Natural killer cell (primary cell): ENCODE measurements at regions of chr15 and their contacts with region 1.

Region 1: DNA sequence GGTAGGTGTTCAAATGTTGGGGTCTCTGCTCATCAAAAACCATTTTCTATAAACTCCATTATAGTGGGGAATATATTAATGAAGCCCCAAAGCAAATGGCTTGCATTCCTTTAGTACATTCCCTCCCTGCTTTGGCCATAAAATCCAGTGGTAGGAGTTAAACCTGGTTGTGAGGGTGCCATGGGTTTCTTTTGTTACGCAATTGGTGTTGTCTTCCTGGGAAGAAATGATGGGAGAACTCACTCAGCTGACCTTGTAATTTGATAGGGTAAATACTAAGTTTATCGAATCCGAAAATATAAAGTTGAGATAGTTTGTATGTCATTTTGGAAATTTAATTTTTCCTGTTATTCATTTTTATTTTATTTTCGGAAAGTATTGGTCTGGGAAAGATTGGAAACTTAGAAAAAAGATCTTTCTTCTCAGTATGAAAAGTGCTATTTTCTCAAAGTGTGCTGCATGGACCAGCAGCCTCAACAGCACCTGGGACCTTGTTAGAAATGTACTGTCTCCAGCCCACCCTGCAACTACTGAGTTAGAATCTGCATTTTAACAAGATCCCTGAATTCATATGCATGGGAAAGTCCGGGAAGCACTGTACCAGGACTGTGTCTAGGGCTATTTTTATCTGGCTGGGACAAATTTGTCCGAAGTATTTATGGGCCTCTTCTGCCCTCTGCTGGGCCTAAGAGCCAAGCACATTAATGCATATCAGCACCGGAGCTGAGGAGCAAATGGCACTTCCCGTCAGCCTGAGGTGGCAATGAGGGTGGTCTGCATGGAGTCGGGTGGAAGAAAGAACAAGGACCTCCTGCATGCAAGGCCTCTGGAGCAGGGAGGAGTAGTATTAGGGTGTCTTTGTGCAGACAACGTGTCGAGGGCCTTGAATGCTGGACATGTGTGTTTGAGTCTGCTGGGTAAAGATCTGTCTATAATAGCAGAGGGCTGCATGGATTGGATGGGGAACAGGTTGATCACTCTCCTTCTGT is 54.7 kb downstream of the FAM81A start:
- DNase-seq: peak; percentile 45 to 82
- ATAC-seq: peak; percentile 79 to 89 (median 88)
- H3K4me3 ChIP-seq: no peak overlapping the region
- H3K4me3 Mint-ChIP-seq: no peak overlapping the region
- H3K27ac ChIP-seq: no peak overlapping the region
- H3K27ac Mint-ChIP-seq: no peak overlapping the region
- H3K4me1 ChIP-seq: peaks cover 5% of the 10 kb centered on the region
- H3K4me1 Mint-ChIP-seq: peaks cover 6 to 7% of the 10 kb centered on the region in 2 donors
- H3K27me3 ChIP-seq: no peaks in the 10 kb centered on the region
- H3K27me3 Mint-ChIP-seq: peaks cover 3 to 21% of the 10 kb centered on the region in 2 donors
- CTCF ChIP-seq: peak; percentile 93

Region 2: GRCh38 chr15:58957101-58957973 is 535.3 kb before region 1 on chr15:
- intact Hi-C with region 1: loop called (anchors 1 kb)
- DNase-seq: peak; percentile 23 to 87
- ATAC-seq: peak; percentile 91 to 98 (median 96)
- H3K4me3 ChIP-seq: no peak overlapping the region
- H3K4me3 Mint-ChIP-seq: no peak overlapping the region
- H3K27ac ChIP-seq: no peak overlapping the region
- H3K27ac Mint-ChIP-seq: no peak overlapping the region
- H3K4me1 ChIP-seq: no peaks in the 10 kb centered on the region
- H3K4me1 Mint-ChIP-seq: peaks cover 5 to 6% of the 10 kb centered on the region in 2 donors
- H3K27me3 ChIP-seq: no peaks in the 10 kb centered on the region
- H3K27me3 Mint-ChIP-seq: peaks cover 0 to 8% of the 10 kb centered on the region in 2 donors
- CTCF ChIP-seq: peak; percentile 83

Region 3: GRCh38 chr15:59104912-59105732 is 387.6 kb before region 1 on chr15 and contains the start of gene CCNB2:
- intact Hi-C with region 1: loop called (anchors 5 kb)
- DNase-seq: peak; percentile 80 to 95
- ATAC-seq: peak; percentile 99 to 100 (median 100)
- H3K4me3 ChIP-seq: peak within 1 kb of the TSS; percentile 61
- H3K4me3 Mint-ChIP-seq: peak within 1 kb of the TSS; percentile 97
- H3K27ac ChIP-seq: peak within 1 kb of the TSS; percentile 57
- H3K27ac Mint-ChIP-seq: peak within 1 kb of the TSS; percentile 94 to 95
- H3K4me1 ChIP-seq: peaks cover 5% of the 10 kb centered on the region
- H3K4me1 Mint-ChIP-seq: peaks cover 8 to 9% of the 10 kb centered on the region in 2 donors
- H3K27me3 ChIP-seq: no peaks in the 10 kb centered on the region
- H3K27me3 Mint-ChIP-seq: no peaks in the 10 kb centered on the region
- CTCF ChIP-seq: no peak
- total RNA-seq, gene CCNB2: 0.47 to 1.4 (median 1.1) TPM

Region 4: DNA sequence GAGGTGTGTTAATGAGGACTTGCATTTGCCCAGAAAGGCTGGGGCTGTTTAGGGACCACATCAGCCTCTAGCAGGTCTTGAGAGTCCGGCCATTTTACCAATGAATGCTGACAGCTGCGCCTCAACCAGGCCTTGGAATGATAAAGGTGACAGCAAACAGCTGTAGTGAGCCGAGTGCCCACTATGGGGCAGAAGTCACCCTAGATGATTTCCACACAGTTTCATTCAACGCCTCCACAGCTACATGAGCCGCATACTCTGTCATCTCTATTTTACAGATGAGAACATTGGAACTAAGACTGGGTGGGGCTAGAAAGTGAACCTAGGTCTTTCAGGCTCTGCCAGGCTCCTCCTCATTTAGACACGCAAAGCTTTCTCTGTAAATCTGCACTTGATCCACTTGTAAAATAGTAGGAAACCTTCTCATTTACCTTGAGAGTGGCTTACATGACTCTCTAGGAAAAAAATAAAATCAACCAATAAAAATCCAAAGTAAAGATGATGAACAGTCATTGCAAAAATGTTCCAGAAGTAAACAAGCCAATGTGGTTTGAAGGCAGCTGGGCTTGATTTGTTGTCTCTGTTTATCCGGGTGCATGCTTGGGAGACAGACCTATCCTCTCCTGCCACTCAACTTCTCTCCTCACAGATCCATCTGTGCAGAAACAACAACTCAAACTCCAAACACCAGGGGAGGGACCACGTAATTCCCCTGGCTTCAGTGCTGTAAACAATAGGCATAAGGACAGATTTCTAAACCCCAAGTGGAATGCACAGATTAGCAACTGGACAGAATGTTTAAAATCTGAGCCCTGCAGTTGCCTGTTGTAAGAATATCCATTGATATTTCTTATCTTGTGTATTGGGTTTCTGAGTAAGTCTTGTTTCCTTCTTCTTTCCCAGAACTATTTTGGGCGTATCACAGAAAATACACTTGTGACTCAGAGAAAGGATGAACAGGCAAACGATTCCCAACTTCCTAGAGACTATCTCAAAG is 317.6 kb before region 1 on chr15:
- intact Hi-C with region 1: loop called (anchors 5 kb)
- DNase-seq: peak in 1 of 2 donors; percentile 48
- ATAC-seq: peak in 1 of 3 donors; percentile 36
- H3K4me3 ChIP-seq: no peak overlapping the region
- H3K4me3 Mint-ChIP-seq: no peak overlapping the region
- H3K27ac ChIP-seq: no peak overlapping the region
- H3K27ac Mint-ChIP-seq: no peak overlapping the region
- H3K4me1 ChIP-seq: peaks cover 12% of the 10 kb centered on the region
- H3K4me1 Mint-ChIP-seq: peaks cover 9% of the 10 kb centered on the region in 2 donors
- H3K27me3 ChIP-seq: no peaks in the 10 kb centered on the region
- H3K27me3 Mint-ChIP-seq: peaks cover 8 to 18% of the 10 kb centered on the region in 2 donors
- CTCF ChIP-seq: no peak

Region 5: GRCh38 chr15:59349680-59350420 is 142.8 kb before region 1 on chr15:
- intact Hi-C with region 1: no loop called
- DNase-seq: no peak
- ATAC-seq: no peak
- H3K4me3 ChIP-seq: no peak overlapping the region
- H3K4me3 Mint-ChIP-seq: no peak overlapping the region
- H3K27ac ChIP-seq: no peak overlapping the region
- H3K27ac Mint-ChIP-seq: peak overlapping the region in 1 of 2 donors; percentile 58
- H3K4me1 ChIP-seq: peaks cover 12% of the 10 kb centered on the region
- H3K4me1 Mint-ChIP-seq: peaks cover 26 to 27% of the 10 kb centered on the region in 2 donors
- H3K27me3 ChIP-seq: no peaks in the 10 kb centered on the region
- H3K27me3 Mint-ChIP-seq: peaks cover 1 to 15% of the 10 kb centered on the region in 2 donors
- CTCF ChIP-seq: no peak